Common myeloid progenitor, CD34-positive (primary cell): ENCODE measurements at regions of chr21 and their contacts with region 1.

Region 1: GRCh38 chr21:36504067-36505058 is 24.4 kb upstream of the CLDN14 start:
- DNase-seq: peak; percentile 45 to 77 (median 67)
- H3K4me3 ChIP-seq: no peak overlapping the region
- H3K27ac ChIP-seq: no peak overlapping the region
- H3K4me1 ChIP-seq: peaks cover 0 to 12% (median 8%) of the 10 kb centered on the region in 4 experiments
- H3K27me3 ChIP-seq: no peaks in the 10 kb centered on the region

Region 2: DNA sequence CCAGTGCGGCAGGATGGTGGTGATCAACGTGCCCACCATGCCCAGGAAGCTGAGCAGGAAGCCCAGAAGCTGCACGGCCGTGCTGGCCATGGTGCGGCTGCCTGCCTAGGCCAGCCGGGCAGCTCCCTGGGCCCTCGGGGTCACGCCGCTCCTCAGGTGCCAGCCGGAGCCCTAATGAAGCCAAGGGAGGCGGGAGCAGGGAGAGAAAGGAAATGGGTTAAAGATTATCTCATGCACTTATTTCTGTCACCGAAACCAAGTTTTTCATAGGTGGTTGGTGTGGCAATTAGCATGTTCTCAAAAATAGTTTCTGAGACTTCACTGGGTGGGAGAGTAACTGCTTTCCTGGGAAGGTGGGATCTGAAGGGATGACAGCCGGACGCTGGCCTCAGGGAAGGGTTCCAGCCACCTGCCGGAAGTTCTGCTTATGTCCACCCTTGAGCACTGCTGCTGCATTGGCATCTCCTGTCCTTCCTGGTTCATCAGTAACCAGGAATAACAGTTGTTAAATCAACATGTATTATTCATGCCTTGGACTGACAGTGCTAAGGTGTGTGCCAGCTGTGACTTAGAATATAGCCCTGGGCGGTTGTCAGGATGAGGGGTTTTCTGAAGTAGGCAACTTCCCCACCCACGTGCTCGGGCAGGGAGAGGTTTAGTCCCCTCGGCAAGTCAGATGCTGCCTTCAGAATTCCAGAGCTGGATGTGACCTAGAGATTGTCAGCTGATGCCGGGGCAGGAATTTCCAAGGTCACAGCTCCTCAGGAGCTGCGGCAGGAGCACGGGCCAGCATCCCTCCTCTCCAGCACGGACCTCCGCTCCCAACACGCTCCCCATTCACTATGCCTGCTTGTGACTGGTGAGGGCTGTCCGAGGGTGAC is 42.5 kb before region 1 on chr21:
- CTCF ChIA-PET with region 1: no interaction called
- POLR2A ChIA-PET with region 1: no interaction called
- DNase-seq: no peak
- H3K4me3 ChIP-seq: no peak overlapping the region
- H3K27ac ChIP-seq: no peak overlapping the region
- H3K4me1 ChIP-seq: peaks cover 0 to 20% (median 2%) of the 10 kb centered on the region in 4 experiments
- H3K27me3 ChIP-seq: no peaks in the 10 kb centered on the region

Region 3: DNA sequence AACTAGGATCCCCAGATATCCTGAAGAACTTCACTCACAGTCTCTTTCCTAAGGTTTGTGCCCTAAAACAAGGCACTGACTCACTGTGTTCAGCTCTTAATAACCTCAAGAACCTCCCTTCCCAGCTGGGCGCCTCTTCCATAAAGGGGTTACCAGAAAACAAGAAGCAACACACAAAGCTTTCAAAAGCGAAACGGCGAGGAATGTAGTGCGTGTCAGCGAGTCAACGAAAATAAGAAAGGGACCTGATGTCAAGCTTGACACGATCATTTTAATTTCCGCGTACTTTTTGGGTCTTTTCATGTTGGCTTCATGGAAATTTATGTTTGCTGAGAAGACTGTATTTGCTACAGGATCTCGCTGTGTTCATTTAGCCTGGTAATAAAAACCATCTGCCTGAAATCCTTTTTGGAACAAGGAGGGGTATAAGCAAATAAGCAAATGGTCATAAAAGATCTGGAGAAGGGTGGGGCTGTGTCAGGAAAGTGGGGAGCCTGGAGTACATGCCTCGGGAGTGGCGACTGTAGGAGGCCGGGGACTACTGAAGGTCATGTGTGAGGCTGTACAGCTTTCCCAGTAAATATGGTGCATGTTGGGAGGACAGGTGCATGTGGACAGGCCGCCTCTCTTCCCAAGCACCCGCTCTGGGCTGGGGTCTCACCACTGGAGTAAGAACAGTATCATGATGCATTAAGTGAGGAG is 13.0 kb before region 1 on chr21:
- CTCF ChIA-PET with region 1: interaction called, 11 read pairs
- POLR2A ChIA-PET with region 1: no interaction called
- DNase-seq: no peak
- H3K4me3 ChIP-seq: no peak overlapping the region
- H3K27ac ChIP-seq: no peak overlapping the region
- H3K4me1 ChIP-seq: peaks cover 0 to 8% (median 6%) of the 10 kb centered on the region in 4 experiments
- H3K27me3 ChIP-seq: peaks cover 0 to 2% (median 0%) of the 10 kb centered on the region in 5 experiments

Region 4: GRCh38 chr21:36542312-36543107 is 38.1 kb after region 1 on chr21:
- CTCF ChIA-PET with region 1: no interaction called
- POLR2A ChIA-PET with region 1: no interaction called
- DNase-seq: peak; percentile 22 to 40 (median 36)
- H3K4me3 ChIP-seq: peak overlapping the region in 1 of 7 experiments; percentile 23
- H3K27ac ChIP-seq: no peak overlapping the region
- H3K4me1 ChIP-seq: peaks cover 0 to 4% (median 2%) of the 10 kb centered on the region in 4 experiments
- H3K27me3 ChIP-seq: peaks cover 2 to 38% (median 9%) of the 10 kb centered on the region in 5 experiments

Region 5: DNA sequence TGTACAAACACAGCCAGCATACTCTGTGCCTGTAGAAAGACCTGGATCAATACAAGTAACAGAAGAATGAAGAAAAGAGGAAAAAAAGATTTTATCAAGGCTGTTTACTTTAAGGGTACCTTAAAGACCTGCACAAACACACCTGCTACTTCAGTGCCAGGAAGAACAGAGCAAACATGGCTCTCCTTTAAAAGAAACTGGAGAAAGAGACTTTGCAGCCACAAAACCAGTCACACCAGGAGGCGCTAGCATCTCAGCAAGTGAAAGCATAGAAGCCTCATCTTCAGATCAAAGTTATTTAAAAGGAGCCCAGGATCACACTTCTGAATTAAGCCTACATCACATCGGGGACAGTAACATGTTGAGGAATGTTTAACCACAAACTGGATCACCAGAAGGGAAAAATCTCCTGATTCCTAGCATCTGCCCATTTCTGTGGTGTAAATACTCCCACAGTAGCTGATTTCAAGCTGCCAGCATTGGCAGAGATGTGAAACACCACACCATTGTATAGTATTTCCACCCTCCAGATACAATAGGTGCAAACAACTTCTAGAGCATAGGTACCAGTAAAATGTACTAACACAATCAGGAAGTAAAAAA is 80.7 kb after region 1 on chr21:
- CTCF ChIA-PET with region 1: interaction called, 15 read pairs
- POLR2A ChIA-PET with region 1: no interaction called
- DNase-seq: no peak
- H3K4me3 ChIP-seq: no peak overlapping the region
- H3K27ac ChIP-seq: no peak overlapping the region
- H3K4me1 ChIP-seq: peaks cover 0 to 7% (median 4%) of the 10 kb centered on the region in 4 experiments
- H3K27me3 ChIP-seq: no peaks in the 10 kb centered on the region